Heart right ventricle (tissue), 16 donors: ENCODE measurements at regions of chr3 and their contacts with region 1.

Region 1: DNA sequence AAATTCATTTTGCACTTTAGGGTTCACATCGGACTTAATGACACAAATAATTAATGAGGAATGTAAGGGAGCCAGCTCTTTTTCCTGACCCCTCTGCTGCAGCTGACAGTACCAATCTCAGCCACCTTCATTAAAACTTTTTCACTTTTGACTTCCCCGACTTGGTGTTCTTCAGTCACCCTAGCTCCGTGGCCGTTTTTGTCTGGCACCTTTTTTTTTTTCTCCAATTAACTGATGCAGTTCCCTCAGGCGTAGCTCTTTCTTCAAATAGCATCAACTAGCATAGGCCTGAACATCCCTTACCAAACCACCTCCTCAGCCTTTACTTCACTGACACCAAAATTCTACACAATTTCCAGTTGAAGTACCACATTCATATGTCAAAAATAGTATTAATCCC is 350.8 kb downstream of the GRM7 start:
- DNase-seq: no peak
- ATAC-seq: no peak
- H3K4me3 ChIP-seq: no peak overlapping the region
- H3K27ac ChIP-seq: no peak overlapping the region
- H3K4me1 ChIP-seq: no peaks in the 10 kb centered on the region
- H3K27me3 ChIP-seq: no peaks in the 10 kb centered on the region
- CTCF ChIP-seq: no peak

Region 2: DNA sequence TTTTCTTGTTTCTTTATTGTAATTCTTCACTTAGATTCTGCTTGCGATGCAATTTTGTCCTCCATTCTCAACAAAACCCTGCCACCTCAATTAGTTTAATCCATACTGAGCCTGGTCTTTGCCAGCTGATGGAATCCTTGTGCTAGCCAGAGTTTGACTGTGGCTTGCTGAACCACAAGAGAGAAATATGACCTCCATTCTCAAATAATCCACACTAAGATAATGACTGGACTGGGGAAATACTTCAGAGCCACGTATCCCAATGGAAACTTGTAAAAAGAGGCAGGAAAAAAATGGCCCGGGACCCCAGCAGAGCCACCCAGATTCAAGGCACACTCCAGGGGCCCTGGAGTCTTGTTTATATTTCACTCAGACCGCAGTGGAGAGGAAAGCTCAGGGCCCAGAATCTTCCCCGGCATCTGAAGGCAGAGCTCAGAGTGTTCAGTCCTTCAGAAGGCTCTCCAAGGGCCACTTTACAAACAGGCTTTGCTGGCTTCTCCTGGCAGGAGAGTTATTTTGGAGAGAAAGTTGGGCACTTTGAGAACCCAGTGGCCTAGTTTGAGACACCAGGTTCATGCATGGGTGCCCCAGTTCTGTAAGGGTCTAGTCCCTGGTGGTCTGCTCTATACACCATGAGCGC is 1370.2 kb after region 1 on chr3:
- intact Hi-C with region 1: loop called in 1 of 10 experiments (anchors 5 kb)
- DNase-seq: no peak
- ATAC-seq: no peak
- H3K4me3 ChIP-seq: no peak overlapping the region
- H3K27ac ChIP-seq: no peak overlapping the region
- H3K4me1 ChIP-seq: peaks cover 0 to 20% (median 8%) of the 10 kb centered on the region in 9 donors
- H3K27me3 ChIP-seq: no peaks in the 10 kb centered on the region
- CTCF ChIP-seq: no peak